HepG2 (cell line): ENCODE measurements at regions of chr14 and their contacts with region 1.

Region 1: GRCh38 chr14:28751467-28752058 is 15.0 kb upstream of the FOXG1 start:
- DNase-seq: peak; percentile 81
- ATAC-seq: peak; percentile 98
- H3K4me3 ChIP-seq: no peak overlapping the region
- H3K27ac ChIP-seq: no peak overlapping the region
- H3K4me1 ChIP-seq: no peaks in the 10 kb centered on the region
- H3K27me3 ChIP-seq: peaks cover 3 to 21% of the 10 kb centered on the region in 2 experiments; a peak in 3 of 5 replicates
- CTCF ChIP-seq: peak; percentile 95
- EP300 ChIP-seq: no peak
- POLR2A ChIP-seq: no peak
- RAD21 ChIP-seq: peak; percentile 67

Region 2: DNA sequence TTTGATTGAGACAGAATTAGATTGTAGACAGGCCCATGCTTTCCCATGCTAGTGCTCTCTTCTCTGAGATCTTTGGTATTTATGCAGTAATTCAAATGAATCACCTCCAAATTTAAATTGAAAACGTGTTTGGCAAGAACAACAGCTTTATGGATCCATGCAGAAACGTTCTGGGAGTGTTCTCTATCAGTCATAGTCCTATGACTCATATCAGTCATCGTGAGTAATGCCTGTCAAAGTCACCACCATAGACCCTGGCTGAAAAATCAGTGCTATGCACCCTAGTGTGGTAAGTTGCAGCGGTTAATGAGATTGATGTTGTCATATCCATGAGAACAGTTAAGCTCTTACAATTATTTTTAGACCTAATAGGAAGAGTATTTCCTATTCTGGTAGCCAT is 75.1 kb before region 1 on chr14:
- CTCF ChIA-PET with region 1: no interaction called
- POLR2A ChIA-PET with region 1: no interaction called
- in situ Hi-C with region 1: no loop called
- intact Hi-C with region 1: no loop called
- DNase-seq: no peak
- ATAC-seq: no peak; the same call in 2 of the 3 replicates
- H3K4me3 ChIP-seq: no peak overlapping the region
- H3K27ac ChIP-seq: no peak overlapping the region
- H3K4me1 ChIP-seq: no peaks in the 10 kb centered on the region
- H3K27me3 ChIP-seq: no peaks in the 10 kb centered on the region
- CTCF ChIP-seq: no peak
- EP300 ChIP-seq: no peak
- POLR2A ChIP-seq: no peak
- RAD21 ChIP-seq: no peak

Region 3: DNA sequence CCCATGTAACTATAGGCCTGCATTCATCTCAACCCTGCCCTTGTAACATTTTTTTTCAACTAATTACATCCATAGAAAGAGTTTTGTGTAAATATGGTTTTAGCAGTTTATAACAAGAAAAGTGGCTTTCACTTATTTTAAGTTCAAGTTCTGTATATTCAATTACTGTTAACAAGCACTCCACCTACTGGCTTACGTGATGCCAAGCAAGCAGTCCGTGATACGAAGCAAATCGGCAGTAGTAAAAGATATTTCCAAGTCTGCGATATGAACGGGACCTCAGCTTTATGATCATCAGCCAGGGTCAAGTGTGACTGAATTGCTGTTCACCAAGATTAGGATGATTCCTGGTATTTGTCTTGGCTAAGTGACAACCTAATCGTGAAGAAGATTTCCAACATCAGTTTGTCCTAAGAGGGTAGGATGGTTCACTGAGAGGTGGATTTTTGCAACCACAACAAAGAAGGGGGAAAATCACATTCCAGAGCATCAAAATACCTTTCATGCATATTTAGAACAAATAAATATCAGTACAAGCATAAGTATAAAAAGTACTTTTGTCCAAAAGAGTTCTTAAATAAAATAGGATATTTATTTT is 471.2 kb after region 1 on chr14:
- CTCF ChIA-PET with region 1: interaction called, 19 read pairs
- POLR2A ChIA-PET with region 1: no interaction called
- in situ Hi-C with region 1: loop called (anchors 5 kb)
- intact Hi-C with region 1: loop called (anchors 1 kb)
- DNase-seq: peak; percentile 63
- ATAC-seq: peak; percentile 91
- H3K4me3 ChIP-seq: no peak overlapping the region
- H3K27ac ChIP-seq: no peak overlapping the region
- H3K4me1 ChIP-seq: no peaks in the 10 kb centered on the region
- H3K27me3 ChIP-seq: no peaks in the 10 kb centered on the region
- CTCF ChIP-seq: peak; percentile 82
- EP300 ChIP-seq: no peak
- POLR2A ChIP-seq: no peak
- RAD21 ChIP-seq: no peak

Region 4: GRCh38 chr14:29927376-29928116 is 1176.0 kb after region 1 on chr14 and contains the start of gene PRKD1:
- CTCF ChIA-PET with region 1: no interaction called
- POLR2A ChIA-PET with region 1: no interaction called
- in situ Hi-C with region 1: no loop called
- intact Hi-C with region 1: loop called (anchors 5 kb)
- DNase-seq: peak; percentile 28
- ATAC-seq: peak; percentile 87
- H3K4me3 ChIP-seq: peak within 1 kb of the TSS; percentile 68 to 80 (median 75)
- H3K27ac ChIP-seq: no peak within 1 kb of the TSS
- H3K4me1 ChIP-seq: peaks cover 10% of the 10 kb centered on the region
- H3K27me3 ChIP-seq: peaks cover 0 to 30% of the 10 kb centered on the region in 2 experiments; a peak in 4 of 5 replicates
- CTCF ChIP-seq: no peak
- EP300 ChIP-seq: no peak
- POLR2A ChIP-seq: no peak
- RAD21 ChIP-seq: no peak
- total RNA-seq, gene PRKD1: 0.22 and 0.41 TPM in 2 replicates

Region 5: DNA sequence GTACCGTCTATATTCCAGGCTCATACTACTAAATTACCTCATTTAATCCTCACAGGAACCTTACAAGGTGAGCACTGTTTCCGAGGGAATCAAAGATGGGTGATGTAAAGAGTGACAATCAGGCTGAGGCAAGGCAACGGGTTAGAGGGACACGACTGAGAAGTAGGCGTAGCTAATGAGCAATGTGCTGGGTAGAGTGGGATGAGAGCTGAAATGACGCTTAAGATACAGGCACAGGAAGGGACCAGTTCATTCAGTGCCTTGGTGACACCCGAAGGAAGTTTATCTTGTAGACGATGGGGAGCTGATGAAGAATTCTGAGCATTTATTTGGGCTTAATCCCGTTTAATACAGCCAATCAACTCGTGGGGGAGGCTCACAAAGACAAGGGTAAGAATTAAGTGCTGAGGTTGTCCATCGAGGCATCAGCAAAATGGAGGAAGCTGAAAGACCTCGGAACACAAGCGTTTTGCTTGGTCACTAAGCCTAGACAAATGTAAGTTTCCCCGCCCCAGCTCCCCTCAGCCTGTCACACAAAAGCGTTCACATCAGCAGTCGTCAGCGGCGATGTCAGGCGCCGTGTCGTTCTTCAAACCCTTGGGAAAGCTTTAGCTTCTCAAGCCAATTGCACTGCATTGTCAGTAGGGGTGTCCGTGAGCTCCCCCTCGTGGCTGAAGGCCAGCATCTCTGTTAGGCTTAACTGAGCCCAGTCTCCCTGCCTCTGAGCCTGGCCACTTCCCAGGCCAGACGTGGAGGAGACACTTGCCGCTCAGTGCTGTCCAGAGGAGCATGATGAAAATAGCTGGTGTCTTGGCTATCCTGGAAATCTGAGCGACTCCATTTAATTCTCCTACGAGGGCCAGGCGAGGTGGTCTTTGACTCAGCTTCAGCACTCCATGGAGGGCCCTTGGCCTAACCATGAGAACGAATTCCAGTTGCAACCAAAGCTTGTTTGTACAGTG is 1518.9 kb after region 1 on chr14:
- CTCF ChIA-PET with region 1: interaction called, 17 read pairs
- POLR2A ChIA-PET with region 1: no interaction called
- in situ Hi-C with region 1: loop called (anchors 10 kb)
- intact Hi-C with region 1: loop called (anchors 1 kb)
- DNase-seq: peak; percentile 85
- ATAC-seq: peak; percentile 100
- H3K4me3 ChIP-seq: no peak overlapping the region
- H3K27ac ChIP-seq: no peak overlapping the region
- H3K4me1 ChIP-seq: no peaks in the 10 kb centered on the region
- H3K27me3 ChIP-seq: peaks cover 0 to 4% of the 10 kb centered on the region in 2 experiments; a peak in 1 of 5 replicates
- CTCF ChIP-seq: peak; percentile 99
- EP300 ChIP-seq: no peak
- POLR2A ChIP-seq: no peak
- RAD21 ChIP-seq: peak; percentile 80; the same call in 1 of the 2 replicates

Region 6: DNA sequence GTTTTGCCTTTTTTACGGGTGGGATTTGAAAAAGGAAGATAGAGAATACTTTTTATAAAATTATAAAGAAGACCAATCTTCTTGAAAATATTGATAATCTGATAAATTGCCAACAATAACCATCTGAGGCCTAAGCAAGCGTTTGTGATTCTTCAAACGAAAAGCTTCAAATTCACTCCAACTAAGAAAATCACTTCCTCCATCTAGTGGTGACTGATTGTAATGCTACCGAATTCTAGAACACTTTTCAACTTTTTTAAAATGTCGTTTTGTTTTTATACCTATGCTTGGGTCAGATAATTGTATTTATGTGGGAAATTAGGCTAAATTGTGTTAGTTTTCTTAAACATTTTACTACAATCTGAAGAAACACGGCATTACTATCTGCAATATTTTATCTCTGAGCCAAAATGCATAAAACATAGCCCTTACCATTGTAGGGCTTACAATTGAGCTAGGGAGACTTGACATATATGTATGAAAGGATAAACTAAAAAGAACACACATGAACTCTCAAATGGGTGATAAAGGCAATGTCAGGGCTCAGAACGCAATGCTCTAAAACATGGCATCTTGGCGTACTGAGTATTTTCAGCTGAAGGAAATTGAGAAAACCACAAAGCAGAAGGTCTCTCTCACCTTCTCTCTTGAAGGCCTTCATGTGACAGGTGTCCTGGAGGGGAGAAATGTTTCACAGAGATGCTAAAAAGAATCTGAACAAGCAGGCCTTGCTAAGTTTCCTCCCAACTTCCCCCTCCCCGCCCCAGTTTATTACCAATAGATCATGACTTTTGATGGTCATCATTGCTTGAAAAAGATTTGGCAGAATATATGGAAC is 1770.6 kb after region 1 on chr14:
- CTCF ChIA-PET with region 1: interaction called, 3 read pairs
- POLR2A ChIA-PET with region 1: no interaction called
- in situ Hi-C with region 1: loop called (anchors 10 kb)
- intact Hi-C with region 1: no loop called
- DNase-seq: peak; percentile 57
- ATAC-seq: peak; percentile 70
- H3K4me3 ChIP-seq: no peak overlapping the region
- H3K27ac ChIP-seq: no peak overlapping the region
- H3K4me1 ChIP-seq: no peaks in the 10 kb centered on the region
- H3K27me3 ChIP-seq: 0 out of 5 replicates have a peak, but pooled peaks cover 0 to 2% of the 10 kb centered on the region in 2 experiments
- CTCF ChIP-seq: peak; percentile 78
- EP300 ChIP-seq: no peak
- POLR2A ChIP-seq: no peak
- RAD21 ChIP-seq: no peak